ENCODE measurements at regions of chr3 and their contacts with region 1.

Region 1: GRCh38 chr3:148459931-148460513 is 237.7 kb upstream of the AGTR1 start:
- DNase-seq: no peak
- H3K4me3 ChIP-seq: no peak overlapping the region
- H3K4me3 Mint-ChIP-seq: no peak overlapping the region
- H3K27ac Mint-ChIP-seq: no peak overlapping the region
- H3K4me1 ChIP-seq: no peaks in the 10 kb centered on the region
- H3K4me1 Mint-ChIP-seq: no peaks in the 10 kb centered on the region
- H3K27me3 ChIP-seq: no peaks in the 10 kb centered on the region
- H3K27me3 Mint-ChIP-seq: no peaks in the 10 kb centered on the region
- CTCF ChIP-seq: peak in 1 of 2 experiments; percentile 41

Region 2: GRCh38 chr3:148297013-148297412 is 163.0 kb before region 1 on chr3:
- CTCF ChIA-PET with region 1: no interaction called
- POLR2A ChIA-PET with region 1: no interaction called
- intact Hi-C with region 1: no loop called
- DNase-seq: no peak
- H3K4me3 ChIP-seq: no peak overlapping the region
- H3K4me3 Mint-ChIP-seq: no peak overlapping the region
- H3K27ac Mint-ChIP-seq: no peak overlapping the region
- H3K4me1 ChIP-seq: no peaks in the 10 kb centered on the region
- H3K4me1 Mint-ChIP-seq: peaks cover 9% of the 10 kb centered on the region
- H3K27me3 ChIP-seq: no peaks in the 10 kb centered on the region
- H3K27me3 Mint-ChIP-seq: peaks cover 3% of the 10 kb centered on the region
- CTCF ChIP-seq: no peak

Region 3: DNA sequence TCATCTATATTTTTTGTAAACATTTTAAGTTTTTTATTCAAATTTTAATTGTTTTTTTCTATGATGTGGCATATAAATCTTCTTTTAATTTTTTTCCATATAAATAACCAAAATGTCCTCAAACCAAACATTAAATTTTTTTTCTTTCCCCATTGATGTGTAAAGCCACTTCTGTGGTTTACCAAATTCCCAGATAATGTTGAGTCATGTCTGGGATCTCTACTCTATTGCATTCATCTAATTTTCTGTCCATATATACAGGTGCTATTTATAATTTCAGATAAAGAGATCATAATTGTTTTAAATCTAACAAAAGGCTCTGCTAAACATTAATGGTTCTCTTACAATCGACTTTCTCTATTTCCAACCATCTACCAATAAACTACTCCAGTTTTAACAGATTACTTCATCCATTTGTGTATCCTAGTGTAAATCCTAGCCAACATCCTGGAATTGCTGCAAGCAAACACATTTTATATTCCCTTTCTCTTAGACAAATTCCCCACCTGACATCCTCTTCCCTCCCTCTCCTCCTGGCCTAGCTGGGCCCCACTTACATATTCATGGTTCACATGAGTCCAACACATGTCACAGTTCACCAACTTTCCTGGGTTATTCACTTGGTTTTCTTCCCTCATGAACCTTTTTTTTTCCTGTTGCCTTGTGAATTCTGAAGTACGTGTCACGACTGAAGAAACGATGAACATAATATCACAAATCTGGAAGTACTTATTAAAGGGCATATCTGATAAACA is 130.4 kb before region 1 on chr3:
- CTCF ChIA-PET with region 1: no interaction called
- POLR2A ChIA-PET with region 1: no interaction called
- intact Hi-C with region 1: no loop called
- DNase-seq: no peak
- H3K4me3 ChIP-seq: no peak overlapping the region
- H3K4me3 Mint-ChIP-seq: no peak overlapping the region
- H3K27ac Mint-ChIP-seq: no peak overlapping the region
- H3K4me1 ChIP-seq: no peaks in the 10 kb centered on the region
- H3K4me1 Mint-ChIP-seq: peaks cover 8% of the 10 kb centered on the region
- H3K27me3 ChIP-seq: no peaks in the 10 kb centered on the region
- H3K27me3 Mint-ChIP-seq: peaks cover 6% of the 10 kb centered on the region
- CTCF ChIP-seq: no peak

Region 4: DNA sequence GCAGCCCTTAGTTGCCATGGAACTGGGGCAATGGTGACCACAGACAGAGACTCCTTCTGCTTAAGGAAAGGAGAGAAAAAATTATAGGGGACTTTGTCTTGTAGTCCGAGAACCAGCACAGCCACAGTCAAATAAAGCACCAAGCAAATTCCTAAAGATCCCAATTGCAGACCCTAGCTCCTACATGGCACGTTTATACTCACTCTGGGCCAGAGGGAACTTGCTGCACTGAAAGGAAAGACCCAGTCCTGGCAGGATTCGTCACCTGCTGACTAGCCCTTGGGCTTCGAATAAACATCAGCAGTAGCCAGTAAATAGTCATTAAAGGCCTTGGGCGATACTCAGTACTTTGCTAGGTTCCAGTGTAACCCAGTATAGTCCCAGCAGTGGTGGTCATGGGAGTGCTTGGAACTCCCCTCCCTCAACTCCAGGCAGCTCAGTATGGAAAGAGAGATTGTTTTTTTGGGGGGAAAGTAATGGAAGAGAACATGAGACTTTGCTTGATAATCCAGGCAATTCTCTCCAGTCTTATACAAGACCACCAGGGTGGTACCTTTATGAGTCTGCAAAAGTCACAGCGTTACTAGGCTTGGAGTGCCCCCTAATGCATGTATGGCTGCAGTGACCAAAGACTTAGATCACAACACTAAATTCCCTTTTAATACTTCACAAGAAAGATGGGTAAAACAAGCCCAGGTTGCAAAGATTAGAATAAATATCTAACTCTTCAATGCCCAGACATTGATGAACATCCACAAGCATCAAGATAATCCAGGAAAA is 171.3 kb after region 1 on chr3:
- CTCF ChIA-PET with region 1: no interaction called
- POLR2A ChIA-PET with region 1: no interaction called
- intact Hi-C with region 1: loop called (anchors 1 kb)
- DNase-seq: peak in 1 of 2 experiments; percentile 41
- H3K4me3 ChIP-seq: no peak overlapping the region
- H3K4me3 Mint-ChIP-seq: no peak overlapping the region
- H3K27ac Mint-ChIP-seq: no peak overlapping the region
- H3K4me1 ChIP-seq: peaks cover 7% of the 10 kb centered on the region; the same call in 1 of the 2 replicates
- H3K4me1 Mint-ChIP-seq: peaks cover 7% of the 10 kb centered on the region
- H3K27me3 ChIP-seq: no peaks in the 10 kb centered on the region
- H3K27me3 Mint-ChIP-seq: no peaks in the 10 kb centered on the region
- CTCF ChIP-seq: peak; percentile 57 to 58

Region 5: GRCh38 chr3:148718982-148719862 is 259.2 kb after region 1 on chr3:
- CTCF ChIA-PET with region 1: interaction called, 3 read pairs
- POLR2A ChIA-PET with region 1: no interaction called
- intact Hi-C with region 1: loop called (anchors 10 kb)
- DNase-seq: no peak
- H3K4me3 ChIP-seq: no peak overlapping the region
- H3K4me3 Mint-ChIP-seq: no peak overlapping the region
- H3K27ac Mint-ChIP-seq: no peak overlapping the region
- H3K4me1 ChIP-seq: no peaks in the 10 kb centered on the region
- H3K4me1 Mint-ChIP-seq: no peaks in the 10 kb centered on the region
- H3K27me3 ChIP-seq: no peaks in the 10 kb centered on the region
- H3K27me3 Mint-ChIP-seq: no peaks in the 10 kb centered on the region
- CTCF ChIP-seq: peak; percentile 36 to 62